Activated CD8-positive, alpha-beta T cell treated with anti-CD3 and anti-CD28 coated beads for 36 hours (primary cell): ENCODE measurements at regions of chr10 and their contacts with region 1.

Region 1: GRCh38 chr10:32210306-32211045 is 136.5 kb downstream of the EPC1 start:
- DNase-seq: peak; percentile 36
- ATAC-seq: peak; percentile 68
- H3K4me3 Mint-ChIP-seq: no peak overlapping the region
- H3K27ac Mint-ChIP-seq: no peak overlapping the region
- H3K4me1 Mint-ChIP-seq: no peaks in the 10 kb centered on the region
- H3K27me3 Mint-ChIP-seq: peaks cover 2% of the 10 kb centered on the region
- CTCF ChIP-seq: no peak

Region 2: DNA sequence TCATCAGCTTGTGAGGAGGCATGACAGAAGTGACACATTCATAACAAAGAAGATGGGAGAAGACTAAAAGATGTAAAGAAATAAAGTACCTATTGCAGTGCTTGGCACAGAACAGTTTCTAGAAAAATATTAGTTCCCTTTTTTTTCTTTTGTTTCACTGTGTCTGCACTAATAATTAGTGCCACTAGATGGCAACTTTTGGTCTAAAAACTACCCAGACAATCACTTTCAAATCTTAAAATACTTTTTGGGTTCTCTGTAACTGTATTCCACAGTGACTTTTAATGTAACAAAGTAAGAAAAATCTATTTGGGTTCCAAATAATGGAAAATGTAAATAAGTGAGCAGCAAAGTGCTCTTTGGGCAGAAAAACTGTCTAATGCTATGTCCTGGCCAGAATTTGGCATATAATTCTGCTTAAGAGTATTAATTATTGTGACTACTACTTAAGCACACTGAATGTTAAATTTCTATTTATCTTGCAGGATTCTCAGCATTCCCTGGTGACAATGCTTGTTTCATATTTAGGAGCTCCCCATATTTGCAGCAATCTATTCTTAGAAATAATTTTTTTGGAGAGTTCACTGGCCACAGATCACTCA is 19.5 kb before region 1 on chr10:
- CTCF ChIA-PET with region 1: interaction called, 15 read pairs
- POLR2A ChIA-PET with region 1: no interaction called
- intact Hi-C with region 1: no loop called
- DNase-seq: no peak
- ATAC-seq: peak; percentile 47
- H3K4me3 Mint-ChIP-seq: no peak overlapping the region
- H3K27ac Mint-ChIP-seq: no peak overlapping the region
- H3K4me1 Mint-ChIP-seq: no peaks in the 10 kb centered on the region
- H3K27me3 Mint-ChIP-seq: no peaks in the 10 kb centered on the region
- CTCF ChIP-seq: peak; percentile 77